Natural killer cell (primary cell): ENCODE measurements at regions of chr15 and their contacts with region 1.

Region 1: GRCh38 chr15:44663409-44664308 is at the start of gene SPG11:
- DNase-seq: peak; percentile 92 to 98
- ATAC-seq: peak; percentile 83 to 95 (median 84)
- H3K4me3 ChIP-seq: peak within 1 kb of the TSS; percentile 88
- H3K4me3 Mint-ChIP-seq: peak within 1 kb of the TSS; percentile 97
- H3K27ac ChIP-seq: peak within 1 kb of the TSS; percentile 97
- H3K27ac Mint-ChIP-seq: peak within 1 kb of the TSS; percentile 95 to 98
- H3K4me1 ChIP-seq: peaks cover 40% of the 10 kb centered on the region
- H3K4me1 Mint-ChIP-seq: peaks cover 50% of the 10 kb centered on the region in 2 donors
- H3K27me3 ChIP-seq: no peaks in the 10 kb centered on the region
- H3K27me3 Mint-ChIP-seq: no peaks in the 10 kb centered on the region
- CTCF ChIP-seq: peak; percentile 81
- total RNA-seq, gene SPG11: 123 to 154 (median 153) TPM

Region 2: GRCh38 chr15:44676676-44677075 is 13.0 kb after region 1 on chr15:
- intact Hi-C with region 1: loop called (anchors 1 kb)
- DNase-seq: peak; percentile 57 to 59
- ATAC-seq: peak; percentile 73 to 76 (median 74)
- H3K4me3 ChIP-seq: peak overlapping the region; percentile 33
- H3K4me3 Mint-ChIP-seq: peak overlapping the region; percentile 90
- H3K27ac ChIP-seq: peak overlapping the region; percentile 97
- H3K27ac Mint-ChIP-seq: peak overlapping the region; percentile 76 to 84
- H3K4me1 ChIP-seq: peaks cover 90% of the 10 kb centered on the region
- H3K4me1 Mint-ChIP-seq: peaks cover 76% of the 10 kb centered on the region in 2 donors
- H3K27me3 ChIP-seq: no peaks in the 10 kb centered on the region
- H3K27me3 Mint-ChIP-seq: no peaks in the 10 kb centered on the region
- CTCF ChIP-seq: no peak

Region 3: DNA sequence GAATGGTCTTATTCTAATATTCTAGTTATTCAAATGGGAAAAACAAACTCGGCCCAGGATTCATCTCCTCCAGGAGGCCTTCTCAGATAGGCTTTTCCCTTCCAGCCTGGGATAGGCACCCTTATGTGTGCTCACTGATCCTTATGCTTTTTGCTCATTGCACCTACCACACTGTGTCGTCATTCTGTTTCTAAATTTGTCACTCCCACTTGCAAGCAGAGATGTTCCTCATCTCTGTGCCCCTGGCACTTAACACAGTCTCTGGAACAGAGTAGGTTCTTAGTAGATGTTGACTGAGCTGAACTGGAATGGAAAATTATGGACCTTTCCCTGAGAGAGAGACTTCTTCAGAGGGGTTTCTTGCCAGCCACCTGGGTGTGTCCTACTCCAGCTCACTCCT is 18.6 kb after region 1 on chr15:
- intact Hi-C with region 1: loop called (anchors 1 kb)
- DNase-seq: no peak
- ATAC-seq: no peak
- H3K4me3 ChIP-seq: no peak overlapping the region
- H3K4me3 Mint-ChIP-seq: peak overlapping the region; percentile 72
- H3K27ac ChIP-seq: peak overlapping the region; percentile 87
- H3K27ac Mint-ChIP-seq: peak overlapping the region; percentile 76 to 84
- H3K4me1 ChIP-seq: peaks cover 69% of the 10 kb centered on the region
- H3K4me1 Mint-ChIP-seq: peaks cover 86 to 87% of the 10 kb centered on the region in 2 donors
- H3K27me3 ChIP-seq: no peaks in the 10 kb centered on the region
- H3K27me3 Mint-ChIP-seq: no peaks in the 10 kb centered on the region
- CTCF ChIP-seq: no peak

Region 4: DNA sequence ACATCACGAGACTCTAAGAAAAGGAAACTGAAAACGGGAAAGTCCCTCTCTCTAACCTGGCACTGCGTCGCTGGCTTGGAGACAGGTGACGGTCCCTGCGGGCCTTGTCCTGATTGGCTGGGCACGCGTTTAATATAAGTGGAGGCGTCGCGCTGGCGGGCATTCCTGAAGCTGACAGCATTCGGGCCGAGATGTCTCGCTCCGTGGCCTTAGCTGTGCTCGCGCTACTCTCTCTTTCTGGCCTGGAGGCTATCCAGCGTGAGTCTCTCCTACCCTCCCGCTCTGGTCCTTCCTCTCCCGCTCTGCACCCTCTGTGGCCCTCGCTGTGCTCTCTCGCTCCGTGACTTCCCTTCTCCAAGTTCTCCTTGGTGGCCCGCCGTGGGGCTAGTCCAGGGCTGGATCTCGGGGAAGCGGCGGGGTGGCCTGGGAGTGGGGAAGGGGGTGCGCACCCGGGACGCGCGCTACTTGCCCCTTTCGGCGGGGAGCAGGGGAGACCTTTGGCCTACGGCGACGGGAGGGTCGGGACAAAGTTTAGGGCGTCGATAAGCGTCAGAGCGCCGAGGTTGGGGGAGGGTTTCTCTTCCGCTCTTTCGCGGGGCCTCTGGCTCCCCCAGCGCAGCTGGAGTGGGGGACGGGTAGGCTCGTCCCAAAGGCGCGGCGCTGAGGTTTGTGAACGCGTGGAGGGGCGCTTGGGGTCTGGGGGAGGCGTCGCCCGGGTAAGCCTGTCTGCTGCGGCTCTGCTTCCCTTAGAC is 47.9 kb after region 1 on chr15 and contains the start of gene B2M:
- intact Hi-C with region 1: loop called (anchors 1 kb)
- DNase-seq: peak; percentile 97 to 98
- ATAC-seq: peak; percentile 67 to 87 (median 75)
- H3K4me3 ChIP-seq: peak within 1 kb of the TSS; percentile 99
- H3K4me3 Mint-ChIP-seq: peak within 1 kb of the TSS; percentile 100
- H3K27ac ChIP-seq: peak within 1 kb of the TSS; percentile 95
- H3K27ac Mint-ChIP-seq: peak within 1 kb of the TSS; percentile 92 to 100
- H3K4me1 ChIP-seq: peaks cover 32% of the 10 kb centered on the region
- H3K4me1 Mint-ChIP-seq: peaks cover 77 to 78% of the 10 kb centered on the region in 2 donors
- H3K27me3 ChIP-seq: no peaks in the 10 kb centered on the region
- H3K27me3 Mint-ChIP-seq: no peaks in the 10 kb centered on the region
- CTCF ChIP-seq: no peak
- total RNA-seq, gene B2M: 7,484 to 8,893 (median 7,665) TPM

Region 5: GRCh38 chr15:44728576-44729407 is 65.1 kb after region 1 on chr15:
- intact Hi-C with region 1: loop called (anchors 1 kb)
- DNase-seq: peak; percentile 94 to 98
- ATAC-seq: peak; percentile 75 to 92 (median 83)
- H3K4me3 ChIP-seq: peak overlapping the region; percentile 98
- H3K4me3 Mint-ChIP-seq: peak overlapping the region; percentile 98
- H3K27ac ChIP-seq: peak overlapping the region; percentile 96
- H3K27ac Mint-ChIP-seq: peak overlapping the region; percentile 100
- H3K4me1 ChIP-seq: peaks cover 53% of the 10 kb centered on the region
- H3K4me1 Mint-ChIP-seq: peaks cover 57 to 59% of the 10 kb centered on the region in 2 donors
- H3K27me3 ChIP-seq: no peaks in the 10 kb centered on the region
- H3K27me3 Mint-ChIP-seq: no peaks in the 10 kb centered on the region
- CTCF ChIP-seq: no peak

Region 6: DNA sequence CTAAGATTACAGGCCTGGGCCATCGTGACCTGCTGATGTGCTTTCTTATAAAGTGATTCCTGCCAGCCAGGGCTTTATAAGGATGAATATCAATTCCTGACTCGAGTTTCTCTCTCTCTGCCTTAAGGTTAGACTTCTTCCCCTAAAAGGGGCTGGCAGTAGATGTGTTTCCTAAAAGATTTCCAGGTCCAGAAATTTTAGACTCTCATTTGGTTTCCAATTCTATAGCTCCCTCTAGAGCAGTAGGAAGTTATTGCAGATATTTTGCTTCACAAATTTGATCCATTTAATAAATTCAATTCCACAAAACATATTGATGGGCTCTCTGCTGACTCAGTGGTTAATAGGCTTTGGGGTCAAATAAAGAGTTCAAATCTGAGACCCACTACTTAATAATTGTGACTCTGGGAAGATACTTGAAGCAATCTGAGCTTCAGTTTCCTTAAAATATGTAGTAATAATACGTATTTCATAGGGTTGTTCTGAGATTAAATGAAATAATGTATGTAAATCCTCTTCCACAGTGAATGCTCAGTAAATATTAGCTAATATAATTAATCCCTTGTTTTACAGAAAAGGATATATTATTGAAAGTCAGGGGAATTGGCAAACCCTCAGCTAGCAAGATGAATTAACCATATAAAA is 74.8 kb after region 1 on chr15:
- intact Hi-C with region 1: loop called (anchors 1 kb)
- DNase-seq: peak in 1 of 2 donors; percentile 76
- ATAC-seq: peak; percentile 43 to 78 (median 59)
- H3K4me3 ChIP-seq: no peak overlapping the region
- H3K4me3 Mint-ChIP-seq: no peak overlapping the region
- H3K27ac ChIP-seq: no peak overlapping the region
- H3K27ac Mint-ChIP-seq: peak overlapping the region; percentile 64
- H3K4me1 ChIP-seq: peaks cover 17% of the 10 kb centered on the region
- H3K4me1 Mint-ChIP-seq: peaks cover 15 to 19% of the 10 kb centered on the region in 2 donors
- H3K27me3 ChIP-seq: no peaks in the 10 kb centered on the region
- H3K27me3 Mint-ChIP-seq: no peaks in the 10 kb centered on the region
- CTCF ChIP-seq: peak; percentile 88